ENCODE measurements at regions of chr16 and their contacts with region 1.

Region 1: GRCh38 chr16:46801428-46802049 is 29.4 kb downstream of the C16orf87 start:
- DNase-seq: no peak
- H3K4me3 Mint-ChIP-seq: no peak overlapping the region
- H3K27ac Mint-ChIP-seq: no peak overlapping the region
- H3K4me1 Mint-ChIP-seq: peaks cover 18% of the 10 kb centered on the region
- H3K27me3 Mint-ChIP-seq: no peaks in the 10 kb centered on the region

Region 2: DNA sequence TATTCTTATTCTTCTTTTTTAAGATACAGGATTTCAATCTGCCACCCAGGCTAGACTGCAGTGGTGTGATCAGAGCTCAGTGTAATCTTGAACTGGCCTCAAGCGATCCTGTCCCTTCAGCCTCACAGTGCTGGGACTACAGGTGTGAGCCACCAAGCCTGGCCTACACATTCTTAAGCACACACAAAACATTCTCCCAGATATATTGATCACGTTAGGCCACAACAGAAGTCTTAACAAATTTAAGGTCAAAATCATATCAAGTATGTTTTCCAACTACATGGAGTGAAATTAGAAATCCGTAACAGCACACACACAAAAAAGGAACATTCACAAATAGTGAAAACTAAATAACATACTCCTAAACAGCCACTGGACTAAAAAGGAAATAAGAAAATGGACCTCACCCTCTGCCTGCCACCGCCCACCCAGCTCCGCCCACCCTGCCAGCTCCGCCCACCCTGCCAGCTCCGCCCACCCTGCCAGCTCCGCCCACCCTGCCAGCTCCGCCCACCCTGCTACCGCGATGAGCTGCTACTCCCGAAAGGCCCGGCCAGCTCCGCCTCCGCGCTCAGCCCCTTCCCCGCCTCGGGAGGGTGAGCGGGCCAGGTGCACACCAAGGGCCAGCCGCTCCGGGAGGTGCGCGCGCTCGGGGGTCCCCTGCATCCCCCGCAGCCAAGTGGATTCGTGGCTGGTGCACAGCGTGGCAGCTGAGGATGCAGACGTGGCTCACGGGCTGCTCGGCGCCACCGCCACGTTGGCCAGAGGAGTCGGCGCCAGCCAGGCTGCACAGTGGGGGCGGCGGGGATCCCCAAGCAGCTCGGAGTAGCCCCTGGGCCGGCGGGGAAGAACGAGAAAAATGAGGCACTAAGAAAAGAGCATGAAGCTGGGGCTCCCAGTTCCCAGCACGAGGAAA is 11.8 kb before region 1 on chr16:
- CTCF ChIA-PET with region 1: interaction called, 25 read pairs
- POLR2A ChIA-PET with region 1: no interaction called
- DNase-seq: peak; percentile 83
- H3K4me3 Mint-ChIP-seq: peak overlapping the region; percentile 70
- H3K27ac Mint-ChIP-seq: peak overlapping the region; percentile 48
- H3K4me1 Mint-ChIP-seq: peaks cover 28% of the 10 kb centered on the region
- H3K27me3 Mint-ChIP-seq: peaks cover 3% of the 10 kb centered on the region